ENCODE measurements at regions of chr19 and their contacts with region 1.

Region 1: DNA sequence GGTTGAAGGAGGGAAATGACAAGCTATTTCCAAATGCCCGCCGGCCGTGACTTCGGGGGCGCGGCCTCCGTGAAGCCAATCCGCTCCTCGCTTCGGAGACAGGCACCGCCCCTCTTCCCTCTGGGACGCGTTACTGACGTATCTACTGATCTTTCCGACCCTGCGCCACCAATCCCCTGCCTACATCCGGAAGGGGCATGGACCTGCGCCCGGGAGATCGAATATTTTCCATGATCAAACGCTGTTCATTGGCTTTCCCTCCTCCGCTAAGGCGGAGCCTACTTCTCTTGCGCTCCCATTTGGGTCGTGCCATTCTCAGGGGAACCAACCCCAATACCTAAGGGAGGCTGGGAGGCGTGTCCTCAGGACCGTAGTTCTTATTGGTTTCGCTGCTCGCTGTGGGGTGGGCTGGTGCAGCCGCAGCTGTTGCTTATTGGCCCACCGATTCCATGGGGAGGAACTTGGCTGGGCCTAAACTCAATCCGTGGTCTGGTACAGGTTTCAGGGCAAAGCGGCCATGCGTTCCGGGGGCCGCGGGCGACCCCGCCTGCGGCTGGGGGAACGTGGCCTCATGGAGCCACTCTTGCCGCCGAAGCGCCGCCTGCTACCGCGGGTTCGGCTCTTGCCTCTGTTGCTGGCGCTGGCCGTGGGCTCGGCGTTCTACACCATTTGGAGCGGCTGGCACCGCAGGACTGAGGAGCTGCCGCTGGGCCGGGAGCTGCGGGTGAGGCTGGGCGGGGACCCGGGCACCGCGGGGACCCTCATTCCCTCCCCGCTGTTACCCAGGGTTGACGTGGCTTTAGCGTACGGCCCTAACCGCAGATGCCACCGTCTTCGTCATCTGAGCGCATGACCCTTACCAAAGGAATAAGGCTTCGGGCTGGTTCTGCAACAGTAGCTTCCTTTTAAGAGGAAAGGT is at the start of gene QPCTL:
- DNase-seq: peak; percentile 99
- H3K4me3 Mint-ChIP-seq: peak within 1 kb of the TSS; percentile 97
- H3K27ac Mint-ChIP-seq: peak within 1 kb of the TSS; percentile 94
- H3K4me1 Mint-ChIP-seq: peaks cover 21% of the 10 kb centered on the region
- H3K27me3 Mint-ChIP-seq: no peaks in the 10 kb centered on the region
- total RNA-seq, gene QPCTL: 13.8 to 16.8 TPM

Region 2: DNA sequence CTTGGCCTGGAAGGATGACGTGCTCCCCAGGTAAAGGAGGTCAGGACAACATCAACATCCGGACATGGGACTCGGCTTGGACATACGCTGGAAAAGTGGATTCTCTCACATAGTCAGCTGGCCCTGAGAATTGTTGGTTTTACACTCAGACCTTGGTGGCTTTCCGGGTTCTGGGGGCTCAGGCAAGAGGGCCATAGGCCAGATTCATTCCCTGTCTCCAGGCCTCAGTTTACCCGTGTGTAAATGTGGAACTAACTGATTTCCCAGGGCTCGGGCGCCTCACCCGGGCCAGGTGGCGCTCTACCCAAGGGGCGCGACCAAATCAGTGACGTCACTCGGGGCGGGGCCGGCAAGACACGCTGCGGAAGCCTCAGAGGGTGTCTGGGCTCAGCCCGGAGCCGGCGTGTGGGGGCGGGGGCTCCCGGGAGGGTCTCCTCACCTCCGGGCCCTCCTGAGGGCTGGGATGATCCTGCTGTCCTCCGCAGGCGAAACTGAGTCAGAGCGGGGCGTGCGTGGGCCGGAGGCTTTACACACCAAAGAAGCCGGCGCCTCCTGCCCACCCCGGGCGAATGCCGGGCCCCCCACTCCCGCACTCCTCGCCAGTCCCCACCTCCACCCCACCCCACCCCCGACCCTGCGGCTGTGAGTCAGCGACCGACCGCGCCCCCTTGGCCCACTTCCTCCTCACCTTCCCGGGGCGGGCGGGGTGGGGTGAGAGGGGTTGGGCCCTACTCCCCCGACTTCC is 186.0 kb before region 1 on chr19:
- CTCF ChIA-PET with region 1: interaction called, 3 read pairs
- POLR2A ChIA-PET with region 1: no interaction called
- intact Hi-C with region 1: loop called (anchors 5 kb)
- DNase-seq: peak; percentile 99
- H3K4me3 Mint-ChIP-seq: peak overlapping the region; percentile 86
- H3K27ac Mint-ChIP-seq: peak overlapping the region; percentile 94
- H3K4me1 Mint-ChIP-seq: peaks cover 35% of the 10 kb centered on the region
- H3K27me3 Mint-ChIP-seq: no peaks in the 10 kb centered on the region

Region 3: GRCh38 chr19:45615795-45616708 is 76.4 kb before region 1 on chr19:
- CTCF ChIA-PET with region 1: interaction called, 5 read pairs
- POLR2A ChIA-PET with region 1: no interaction called
- intact Hi-C with region 1: loop called (anchors 5 kb)
- DNase-seq: peak; percentile 94
- H3K4me3 Mint-ChIP-seq: no peak overlapping the region
- H3K27ac Mint-ChIP-seq: peak overlapping the region; percentile 67
- H3K4me1 Mint-ChIP-seq: peaks cover 28% of the 10 kb centered on the region
- H3K27me3 Mint-ChIP-seq: no peaks in the 10 kb centered on the region

Region 4: GRCh38 chr19:45705115-45705514 is 12.7 kb after region 1 on chr19:
- CTCF ChIA-PET with region 1: interaction called, 19 read pairs
- POLR2A ChIA-PET with region 1: interaction called, 3 read pairs
- intact Hi-C with region 1: no loop called
- DNase-seq: no peak
- H3K4me3 Mint-ChIP-seq: no peak overlapping the region
- H3K27ac Mint-ChIP-seq: no peak overlapping the region
- H3K4me1 Mint-ChIP-seq: no peaks in the 10 kb centered on the region
- H3K27me3 Mint-ChIP-seq: no peaks in the 10 kb centered on the region

Region 5: GRCh38 chr19:45730389-45731288 is 38.2 kb after region 1 on chr19 and contains the start of gene FBXO46:
- CTCF ChIA-PET with region 1: interaction called, 12 read pairs
- POLR2A ChIA-PET with region 1: interaction called, 10 read pairs
- intact Hi-C with region 1: loop called (anchors 1 kb)
- DNase-seq: peak; percentile 98
- H3K4me3 Mint-ChIP-seq: peak within 1 kb of the TSS; percentile 98
- H3K27ac Mint-ChIP-seq: peak within 1 kb of the TSS; percentile 81
- H3K4me1 Mint-ChIP-seq: peaks cover 30% of the 10 kb centered on the region
- H3K27me3 Mint-ChIP-seq: no peaks in the 10 kb centered on the region
- total RNA-seq, gene FBXO46: 26.1 to 29.4 TPM